Transverse colon (tissue), 4 donors: ENCODE measurements at regions of chr16 and their contacts with region 1.

Region 1: GRCh38 chr16:31713071-31713944 is 160.3 kb upstream of the ZNF267 start:
- DNase-seq: peak; percentile 94
- H3K4me3 ChIP-seq: peak overlapping the region; percentile 74 to 95 (median 90)
- H3K27ac ChIP-seq: peak overlapping the region; percentile 93 to 98 (median 94)
- H3K4me1 ChIP-seq: peaks cover 8 to 16% (median 12%) of the 10 kb centered on the region in 4 donors
- H3K27me3 ChIP-seq: no peaks in the 10 kb centered on the region
- CTCF ChIP-seq: no peak
- EP300 ChIP-seq: no peak
- POLR2A ChIP-seq: peak; percentile 90

Region 2: GRCh38 chr16:30957456-30958174 is 755.7 kb before region 1 on chr16 and contains the start of gene SETD1A:
- in situ Hi-C with region 1: loop called in 1 of 4 experiments (anchors 25 kb)
- intact Hi-C with region 1: no loop called
- DNase-seq: peak; percentile 98
- H3K4me3 ChIP-seq: peak within 1 kb of the TSS; percentile 73 to 85 (median 74)
- H3K27ac ChIP-seq: peak within 1 kb of the TSS; percentile 93 to 96 (median 96)
- H3K4me1 ChIP-seq: peaks cover 12 to 25% (median 18%) of the 10 kb centered on the region in 4 donors
- H3K27me3 ChIP-seq: no peaks in the 10 kb centered on the region
- CTCF ChIP-seq: peak in 2 of 5 experiments; percentile 11 to 54
- EP300 ChIP-seq: no peak
- POLR2A ChIP-seq: peak; percentile 60
- total RNA-seq, gene SETD1A: 5.3 to 37.0 (median 10.8) TPM